ENCODE measurements at regions of chr6 and their contacts with region 1.

Region 1: GRCh38 chr6:27772261-27773001 is 139.8 kb downstream of the OR2B2 start:
- DNase-seq: peak; percentile 70 to 92 (median 82)
- ATAC-seq: peak; percentile 97
- H3K4me3 ChIP-seq: no peak overlapping the region
- H3K4me3 Mint-ChIP-seq: peak overlapping the region; percentile 36
- H3K27ac ChIP-seq: no peak overlapping the region
- H3K27ac Mint-ChIP-seq: no peak overlapping the region
- H3K4me1 ChIP-seq: peaks cover 9% of the 10 kb centered on the region
- H3K4me1 Mint-ChIP-seq: peaks cover 9% of the 10 kb centered on the region
- H3K27me3 ChIP-seq: peaks cover 0 to 10% of the 10 kb centered on the region in 2 experiments
- H3K27me3 Mint-ChIP-seq: peaks cover 18% of the 10 kb centered on the region
- CTCF ChIP-seq: peak; percentile 90

Region 2: GRCh38 chr6:27761391-27761790 is 11.0 kb before region 1 on chr6:
- CTCF ChIA-PET with region 1: interaction called, 14 read pairs
- POLR2A ChIA-PET with region 1: interaction called, 30 read pairs
- intact Hi-C with region 1: no loop called
- DNase-seq: peak in 2 of 14 experiments; percentile 11 to 17
- ATAC-seq: peak; percentile 41
- H3K4me3 ChIP-seq: no peak overlapping the region
- H3K4me3 Mint-ChIP-seq: peak overlapping the region; percentile 94
- H3K27ac ChIP-seq: no peak overlapping the region
- H3K27ac Mint-ChIP-seq: peak overlapping the region; percentile 98
- H3K4me1 ChIP-seq: peaks cover 14% of the 10 kb centered on the region
- H3K4me1 Mint-ChIP-seq: peaks cover 40% of the 10 kb centered on the region
- H3K27me3 ChIP-seq: no peaks in the 10 kb centered on the region
- H3K27me3 Mint-ChIP-seq: peaks cover 2% of the 10 kb centered on the region
- CTCF ChIP-seq: no peak

Region 3: DNA sequence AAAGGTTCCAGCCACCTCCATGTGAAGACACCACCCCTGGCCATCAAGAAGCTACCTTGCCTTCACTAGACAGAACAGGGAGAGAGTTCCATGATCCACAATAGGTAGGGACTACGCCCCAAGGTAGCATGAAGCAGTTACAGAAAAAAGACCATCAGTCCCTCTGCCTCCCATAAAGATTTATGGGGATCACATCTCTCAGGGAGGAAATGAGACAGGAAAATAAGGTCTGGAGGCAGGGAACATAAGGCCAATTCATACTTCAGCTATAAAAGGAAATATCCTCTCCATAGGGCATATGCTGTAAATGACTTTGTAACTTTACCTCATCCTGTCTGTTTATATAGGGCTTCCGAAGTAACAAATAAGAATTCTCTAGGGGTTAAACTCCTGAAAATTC is 10.3 kb after region 1 on chr6:
- CTCF ChIA-PET with region 1: interaction called, 12 read pairs
- POLR2A ChIA-PET with region 1: no interaction called
- intact Hi-C with region 1: no loop called
- DNase-seq: no peak
- ATAC-seq: no peak
- H3K4me3 ChIP-seq: no peak overlapping the region
- H3K4me3 Mint-ChIP-seq: no peak overlapping the region
- H3K27ac ChIP-seq: no peak overlapping the region
- H3K27ac Mint-ChIP-seq: no peak overlapping the region
- H3K4me1 ChIP-seq: no peaks in the 10 kb centered on the region
- H3K4me1 Mint-ChIP-seq: no peaks in the 10 kb centered on the region
- H3K27me3 ChIP-seq: peaks cover 0 to 5% of the 10 kb centered on the region in 2 experiments
- H3K27me3 Mint-ChIP-seq: peaks cover 41% of the 10 kb centered on the region
- CTCF ChIP-seq: no peak

Measured in CD4-positive, alpha-beta T cell (primary cell).